Psoas muscle (tissue), 8 donors: ENCODE measurements at regions of chr17 and their contacts with region 1.

Region 1: GRCh38 chr17:9707948-9708347 is 62.6 kb downstream of the USP43 start:
- DNase-seq: no peak
- ATAC-seq: no peak
- H3K4me3 ChIP-seq: no peak overlapping the region
- H3K27ac ChIP-seq: no peak overlapping the region
- H3K4me1 ChIP-seq: no peaks in the 10 kb centered on the region
- H3K27me3 ChIP-seq: peaks cover 0 to 2% (median 0%) of the 10 kb centered on the region in 3 donors
- CTCF ChIP-seq: no peak

Region 2: GRCh38 chr17:9676742-9677387 is 31.1 kb before region 1 on chr17:
- intact Hi-C with region 1: no loop called
- DNase-seq: no peak
- ATAC-seq: no peak
- H3K4me3 ChIP-seq: no peak overlapping the region
- H3K27ac ChIP-seq: no peak overlapping the region
- H3K4me1 ChIP-seq: no peaks in the 10 kb centered on the region
- H3K27me3 ChIP-seq: no peaks in the 10 kb centered on the region
- CTCF ChIP-seq: no peak

Region 3: GRCh38 chr17:9743096-9743495 is 35.1 kb after region 1 on chr17:
- intact Hi-C with region 1: loop called in 1 of 2 experiments (anchors 2 kb)
- DNase-seq: no peak
- ATAC-seq: no peak
- H3K4me3 ChIP-seq: no peak overlapping the region
- H3K27ac ChIP-seq: no peak overlapping the region
- H3K4me1 ChIP-seq: no peaks in the 10 kb centered on the region
- H3K27me3 ChIP-seq: peaks cover 0 to 10% (median 6%) of the 10 kb centered on the region in 3 donors
- CTCF ChIP-seq: no peak